ENCODE measurements at regions of chr3 and their contacts with region 1.

Region 1: DNA sequence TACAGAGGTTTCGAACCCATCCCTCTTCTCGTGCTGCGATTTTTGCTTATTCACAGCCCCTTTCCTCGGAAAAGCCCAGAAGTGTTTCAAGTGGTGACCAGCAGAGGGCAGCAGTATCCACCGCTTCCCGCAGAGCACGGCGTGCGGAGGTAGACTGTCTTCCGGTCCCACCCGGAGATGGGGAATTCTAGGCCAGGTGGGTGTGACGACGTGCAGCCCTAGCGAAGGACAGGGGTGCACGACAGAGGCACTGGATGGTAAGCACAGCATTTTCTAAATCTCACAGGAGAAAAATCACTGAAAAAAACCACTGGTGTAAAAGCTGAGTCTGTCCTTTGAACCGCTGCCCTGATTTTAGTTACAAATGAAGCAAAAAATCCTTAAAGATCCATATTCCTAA is 7.4 kb upstream of the PSMD6 start:
- DNase-seq: peak; percentile 53 to 84 (median 67)
- H3K4me3 ChIP-seq: peak overlapping the region in 58 of 59 donors; percentile 13 to 71 (median 52)
- H3K27ac ChIP-seq: peak overlapping the region in 2 of 59 donors; percentile 10 to 31
- H3K27me3 ChIP-seq: peaks cover 0 to 10% (median 0%) of the 10 kb centered on the region in 45 donors
- CTCF ChIP-seq: peak; percentile 84 to 99 (median 92)

Region 2: DNA sequence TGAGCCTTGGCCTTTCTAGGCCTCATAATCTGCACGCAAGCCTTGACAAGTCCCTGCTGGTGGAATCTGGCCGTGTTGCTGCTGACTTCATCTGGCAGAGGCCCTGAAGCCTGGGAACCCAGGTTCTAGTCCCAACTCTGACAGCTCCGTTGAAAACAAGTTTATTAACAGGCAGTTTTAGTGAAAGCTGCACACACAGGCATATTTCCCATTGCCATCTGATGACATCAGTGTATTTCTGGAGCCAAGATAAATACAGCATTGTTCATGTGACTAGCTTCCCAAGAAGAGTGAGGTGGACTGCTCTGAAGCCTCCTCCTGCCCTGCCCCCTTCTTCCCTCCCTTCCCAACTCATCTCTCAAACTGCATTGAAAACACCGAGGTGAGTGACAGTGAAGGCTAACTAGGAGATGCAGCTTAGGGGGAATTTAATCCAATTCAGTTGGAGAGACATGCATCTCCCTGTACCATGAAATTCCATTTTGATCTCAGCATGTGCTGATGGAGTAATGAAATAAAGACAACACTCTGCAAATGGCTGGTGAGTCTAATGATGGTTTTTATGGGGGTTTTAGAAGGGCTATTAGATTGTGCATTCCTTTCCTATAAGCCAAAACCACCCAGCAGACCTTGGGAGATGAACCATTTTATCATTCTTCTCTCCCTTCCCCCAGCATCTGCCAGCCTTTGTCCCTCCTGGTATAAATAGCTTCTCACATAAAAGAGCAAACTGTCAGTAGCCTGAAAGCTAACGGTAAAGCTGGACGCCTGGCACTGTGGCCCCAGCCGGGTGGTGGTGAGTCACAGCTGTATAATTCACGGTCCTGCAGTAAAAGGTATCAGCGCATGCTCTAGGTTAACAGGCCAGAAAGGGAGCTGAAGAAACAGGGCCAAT is 156.6 kb after region 1 on chr3:
- intact Hi-C with region 1: loop called in 1 of 2 experiments (anchors 5 kb)
- DNase-seq: peak in 8 of 10 donors; percentile 32 to 84 (median 54)
- H3K4me3 ChIP-seq: peak overlapping the region in 20 of 59 donors; percentile 2 to 41 (median 20)
- H3K27ac ChIP-seq: peak overlapping the region in 56 of 59 donors; percentile 3 to 88 (median 74)
- H3K27me3 ChIP-seq: no peaks in the 10 kb centered on the region
- CTCF ChIP-seq: no peak

Region 3: GRCh38 chr3:64399205-64399800 is 368.6 kb after region 1 on chr3:
- intact Hi-C with region 1: loop called (anchors 2 kb)
- DNase-seq: peak in 1 of 10 donors; percentile 19
- H3K4me3 ChIP-seq: no peak overlapping the region
- H3K27ac ChIP-seq: no peak overlapping the region
- H3K27me3 ChIP-seq: no peaks in the 10 kb centered on the region
- CTCF ChIP-seq: peak; percentile 28 to 79 (median 71)

Region 4: GRCh38 chr3:64484289-64484992 is 453.7 kb after region 1 on chr3:
- intact Hi-C with region 1: loop called (anchors 2 kb)
- DNase-seq: peak; percentile 69 to 91 (median 83)
- H3K4me3 ChIP-seq: no peak overlapping the region
- H3K27ac ChIP-seq: no peak overlapping the region
- H3K27me3 ChIP-seq: peaks cover 0 to 13% (median 0%) of the 10 kb centered on the region in 45 donors
- CTCF ChIP-seq: peak; percentile 87 to 100 (median 96)

Measured in dorsolateral prefrontal cortex (tissue), 120 donors.